ENCODE measurements at regions of chr4 and their contacts with region 1.

Region 1: DNA sequence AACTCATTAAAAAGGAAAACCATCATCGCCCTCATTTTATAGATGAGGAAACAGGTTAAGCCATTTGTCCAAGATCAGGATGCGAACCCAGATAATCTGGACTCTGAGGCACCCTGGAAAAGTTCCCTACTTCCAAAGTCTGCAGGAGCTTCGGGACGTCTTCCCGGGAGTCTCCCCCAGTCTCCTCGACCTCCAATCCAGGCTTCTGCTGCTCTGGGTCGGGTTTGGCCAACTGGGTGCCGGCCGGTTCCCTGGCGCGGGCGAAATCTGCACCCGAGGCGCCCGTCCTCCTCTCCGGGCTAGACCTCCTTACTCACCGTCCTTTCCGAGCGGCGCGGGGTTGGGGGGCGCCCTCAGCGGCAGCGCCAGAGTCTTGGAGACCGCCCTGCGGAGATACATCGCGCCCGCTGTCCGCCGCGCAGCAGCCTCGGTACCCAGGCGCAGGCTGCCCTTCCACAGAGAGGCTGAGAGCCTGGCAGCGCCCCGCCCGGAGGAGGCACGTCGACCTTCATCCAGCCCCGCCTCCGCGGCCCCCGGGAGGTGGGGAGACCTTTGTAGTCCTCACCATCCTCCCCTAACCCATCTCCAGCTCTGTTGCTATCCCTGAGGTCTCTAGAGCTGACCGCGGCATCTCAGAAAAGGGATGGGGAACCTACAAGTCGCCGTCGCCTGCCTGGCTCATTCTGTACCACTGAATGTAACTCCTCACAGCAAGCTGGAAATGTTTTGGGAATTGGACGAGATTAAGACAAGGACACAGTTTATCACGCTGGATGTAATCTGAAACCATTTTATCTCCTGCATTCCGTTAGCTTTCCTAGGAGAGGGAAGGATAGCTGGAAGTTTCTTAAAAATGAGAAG is at the start of gene MGARP:
- DNase-seq: peak; percentile 67 to 83 (median 77)
- H3K4me3 ChIP-seq: peak within 1 kb of the TSS in 2 of 4 donors; percentile 47 to 70
- H3K27ac ChIP-seq: peak within 1 kb of the TSS; percentile 43 to 85 (median 83)
- H3K4me1 ChIP-seq: peaks cover 0 to 18% of the 10 kb centered on the region in 2 donors
- H3K27me3 ChIP-seq: no peaks in the 10 kb centered on the region
- CTCF ChIP-seq: no peak
- POLR2A ChIP-seq: peak in 1 of 2 donors; percentile 82
- total RNA-seq, gene MGARP: 130 to 548 (median 290) TPM

Region 2: DNA sequence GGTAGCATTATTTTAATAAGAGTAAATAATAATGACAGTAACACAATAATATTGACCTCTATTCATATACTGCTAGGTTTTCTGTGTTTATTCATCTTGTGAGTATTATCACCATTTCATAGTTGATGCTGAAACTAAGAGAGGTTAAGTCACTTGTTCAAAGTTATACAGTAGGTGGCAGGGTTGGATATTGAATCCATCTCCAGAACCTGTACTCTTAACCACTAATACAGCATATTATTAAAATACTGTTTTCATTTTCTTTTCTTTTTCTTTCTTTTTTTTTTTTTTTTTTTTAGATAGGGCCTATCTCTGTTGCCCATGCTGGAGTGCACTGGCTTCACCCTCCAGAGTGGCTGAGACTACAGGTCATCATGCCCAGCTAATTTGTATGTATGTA is 95.9 kb before region 1 on chr4:
- intact Hi-C with region 1: loop called in 1 of 2 experiments (anchors 10 kb)
- DNase-seq: no peak
- H3K4me3 ChIP-seq: no peak overlapping the region
- H3K27ac ChIP-seq: no peak overlapping the region
- H3K4me1 ChIP-seq: no peaks in the 10 kb centered on the region
- H3K27me3 ChIP-seq: no peaks in the 10 kb centered on the region
- CTCF ChIP-seq: peak in 4 of 6 experiments; percentile 27 to 47 (median 36)
- POLR2A ChIP-seq: no peak

Measured in adrenal gland (tissue), 19 donors.